Tibial artery (tissue), 4 donors: ENCODE measurements at regions of chr1 and their contacts with region 1.

Region 1: DNA sequence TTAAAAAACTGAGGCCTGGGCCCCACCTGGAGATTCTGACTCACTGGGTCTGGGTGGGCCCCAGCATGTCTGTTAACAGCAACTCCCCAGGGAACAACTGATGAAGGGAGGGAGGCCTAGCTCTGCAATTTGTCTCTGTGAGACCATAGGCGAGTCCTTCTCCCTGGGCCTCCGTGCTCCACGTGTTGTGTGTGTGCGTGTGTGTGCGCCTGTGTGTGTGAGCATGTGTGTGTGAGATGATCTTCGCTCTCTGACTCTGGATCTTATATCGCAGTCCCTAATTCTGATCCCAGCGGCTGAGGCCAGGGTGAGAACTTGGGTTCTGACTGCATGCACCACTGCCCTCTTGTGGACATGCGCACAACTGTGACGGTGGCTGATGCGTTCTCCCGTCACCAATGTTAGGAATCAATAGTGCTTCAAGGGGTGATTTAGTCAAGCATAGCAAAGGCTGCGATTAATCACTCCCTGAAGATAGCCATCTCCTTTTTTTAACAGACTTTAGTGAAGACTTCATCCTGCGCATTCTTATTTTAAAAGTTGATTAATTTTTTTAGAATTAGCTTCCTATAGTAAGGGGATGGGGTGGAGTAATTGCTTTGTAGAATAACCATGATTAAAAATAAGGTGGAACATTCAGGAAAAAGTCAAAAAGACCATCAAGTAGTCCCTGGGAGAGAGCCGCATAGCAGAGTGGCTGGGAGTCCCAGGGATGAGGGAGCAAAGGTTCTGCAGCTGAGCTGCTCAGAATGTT is 62.4 kb upstream of the USP24 start:
- DNase-seq: peak; percentile 80 to 85
- H3K4me3 ChIP-seq: no peak overlapping the region
- H3K27ac ChIP-seq: peak overlapping the region in 1 of 2 donors; percentile 26
- H3K4me1 ChIP-seq: peaks cover 0 to 22% (median 8%) of the 10 kb centered on the region in 4 donors
- H3K27me3 ChIP-seq: no peaks in the 10 kb centered on the region
- CTCF ChIP-seq: peak; percentile 81 to 85

Region 2: DNA sequence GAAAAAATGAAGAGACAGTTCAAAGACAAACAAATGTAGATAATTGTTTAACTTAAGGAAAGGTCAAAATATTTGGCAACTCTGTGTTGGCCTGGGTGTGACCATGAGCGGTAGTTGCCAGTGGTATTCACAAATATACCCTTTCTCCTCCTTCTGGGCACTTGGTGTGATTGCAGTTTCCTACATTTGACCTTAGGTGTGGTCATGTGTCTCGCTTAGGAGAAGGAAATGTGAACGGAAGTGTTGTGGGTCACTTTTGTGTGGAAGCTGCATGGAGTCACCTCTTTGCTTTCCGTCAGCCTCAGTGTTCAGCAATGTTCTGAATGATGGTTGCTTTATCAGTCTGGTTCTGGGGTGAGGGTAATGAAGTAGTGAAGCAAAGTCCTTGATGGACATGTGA is 241.7 kb before region 1 on chr1:
- intact Hi-C with region 1: no loop called
- DNase-seq: no peak
- H3K4me3 ChIP-seq: no peak overlapping the region
- H3K27ac ChIP-seq: no peak overlapping the region
- H3K4me1 ChIP-seq: peaks cover 0 to 22% (median 11%) of the 10 kb centered on the region in 4 donors
- H3K27me3 ChIP-seq: peaks cover 0 to 81% of the 10 kb centered on the region in 2 donors
- CTCF ChIP-seq: no peak

Region 3: GRCh38 chr1:55140546-55140983 is 137.0 kb before region 1 on chr1:
- intact Hi-C with region 1: loop called (anchors 2 kb)
- DNase-seq: peak; percentile 64 to 76
- H3K4me3 ChIP-seq: no peak overlapping the region
- H3K27ac ChIP-seq: peak overlapping the region; percentile 13 to 23
- H3K4me1 ChIP-seq: peaks cover 0 to 5% (median 2%) of the 10 kb centered on the region in 4 donors
- H3K27me3 ChIP-seq: no peaks in the 10 kb centered on the region
- CTCF ChIP-seq: peak; percentile 79 to 81

Region 4: GRCh38 chr1:55252987-55253589 is 24.5 kb before region 1 on chr1:
- intact Hi-C with region 1: no loop called
- DNase-seq: no peak
- H3K4me3 ChIP-seq: no peak overlapping the region
- H3K27ac ChIP-seq: no peak overlapping the region
- H3K4me1 ChIP-seq: peaks cover 0 to 7% (median 0%) of the 10 kb centered on the region in 4 donors
- H3K27me3 ChIP-seq: no peaks in the 10 kb centered on the region
- CTCF ChIP-seq: no peak